ENCODE measurements at regions of chr1 and their contacts with region 1.

Region 1: GRCh38 chr1:150613061-150613920 is 16.1 kb downstream of the ENSA start:
- DNase-seq: peak; percentile 75
- H3K4me3 Mint-ChIP-seq: peak overlapping the region; percentile 62
- H3K27ac Mint-ChIP-seq: peak overlapping the region; percentile 97
- H3K4me1 Mint-ChIP-seq: peaks cover 66% of the 10 kb centered on the region
- H3K27me3 Mint-ChIP-seq: no peaks in the 10 kb centered on the region

Region 2: GRCh38 chr1:150486964-150487762 is 126.1 kb before region 1 on chr1 and contains the start of gene TARS2:
- CTCF ChIA-PET with region 1: no interaction called
- POLR2A ChIA-PET with region 1: no interaction called
- intact Hi-C with region 1: loop called (anchors 5 kb)
- DNase-seq: peak; percentile 98
- H3K4me3 Mint-ChIP-seq: peak within 1 kb of the TSS; percentile 83
- H3K27ac Mint-ChIP-seq: peak within 1 kb of the TSS; percentile 90
- H3K4me1 Mint-ChIP-seq: peaks cover 21% of the 10 kb centered on the region
- H3K27me3 Mint-ChIP-seq: no peaks in the 10 kb centered on the region
- total RNA-seq, gene TARS2: 46.3 to 51.7 TPM

Region 3: DNA sequence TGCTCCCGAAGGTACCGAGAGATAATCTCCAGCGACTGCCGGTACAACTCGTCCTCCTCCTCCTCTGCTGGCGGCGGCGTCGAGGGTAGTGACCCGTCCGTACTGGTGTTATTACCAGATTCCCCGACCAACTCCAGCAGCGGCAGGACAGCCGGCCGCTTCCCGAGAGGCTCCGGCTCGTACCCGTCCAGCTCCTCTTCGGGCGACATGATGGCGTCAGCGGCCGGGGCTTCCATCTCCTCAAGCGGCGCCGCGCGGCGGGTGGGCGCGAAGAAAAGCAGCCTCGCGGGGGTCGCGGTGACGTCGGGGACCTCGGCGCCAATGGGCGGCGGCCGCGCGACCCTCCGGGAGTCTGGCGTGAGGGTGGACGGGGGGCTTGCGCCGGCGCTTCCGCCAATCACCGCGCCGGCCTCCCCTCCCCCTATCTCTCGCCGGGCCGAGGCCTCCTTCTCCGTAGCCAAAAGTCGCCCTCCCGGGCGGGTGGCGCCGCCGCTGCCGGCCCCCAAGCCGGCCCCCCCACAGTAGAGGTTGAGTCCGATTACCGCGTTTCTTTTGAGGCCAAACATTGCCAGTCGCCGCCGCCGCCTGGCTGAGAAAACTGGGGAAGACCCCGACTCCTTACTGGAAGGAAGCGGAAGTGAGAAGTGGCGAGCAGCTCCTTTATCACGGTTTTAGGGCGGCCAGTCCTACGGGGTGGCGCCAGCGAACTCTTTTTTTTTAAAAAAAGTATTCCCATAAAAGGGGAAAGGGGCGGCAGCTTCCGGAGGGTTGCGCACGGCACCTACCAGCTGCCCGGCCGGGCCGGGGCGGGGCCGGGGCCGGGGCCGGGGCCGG is 34.1 kb before region 1 on chr1 and contains the start of gene MCL1:
- CTCF ChIA-PET with region 1: interaction called, 6 read pairs
- POLR2A ChIA-PET with region 1: interaction called, 105 read pairs
- intact Hi-C with region 1: loop called (anchors 1 kb)
- DNase-seq: peak; percentile 95
- H3K4me3 Mint-ChIP-seq: peak within 1 kb of the TSS; percentile 93
- H3K27ac Mint-ChIP-seq: peak within 1 kb of the TSS; percentile 98
- H3K4me1 Mint-ChIP-seq: peaks cover 27% of the 10 kb centered on the region
- H3K27me3 Mint-ChIP-seq: peaks cover 2% of the 10 kb centered on the region
- total RNA-seq, gene MCL1: 280 to 288 TPM

Region 4: DNA sequence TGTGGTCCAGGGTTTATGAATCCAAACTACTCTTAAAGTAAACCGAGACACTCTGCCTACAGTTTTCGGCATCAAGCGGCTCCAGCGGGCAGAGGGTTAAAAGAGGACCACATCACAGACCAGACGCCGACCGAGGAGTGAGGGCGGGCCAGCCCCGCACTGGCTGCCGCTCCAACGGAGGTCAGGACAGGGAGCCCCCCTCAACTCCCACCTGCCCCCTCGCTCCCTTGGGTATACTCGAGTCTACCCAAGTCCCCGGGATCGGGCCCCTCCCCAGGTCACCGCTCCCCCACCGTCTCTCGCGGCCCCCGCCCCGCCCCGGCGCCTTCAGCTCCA is 262.8 kb after region 1 on chr1:
- CTCF ChIA-PET with region 1: no interaction called
- POLR2A ChIA-PET with region 1: no interaction called
- intact Hi-C with region 1: loop called (anchors 5 kb)
- DNase-seq: no peak
- H3K4me3 Mint-ChIP-seq: peak overlapping the region; percentile 84
- H3K27ac Mint-ChIP-seq: peak overlapping the region; percentile 85
- H3K4me1 Mint-ChIP-seq: peaks cover 30% of the 10 kb centered on the region
- H3K27me3 Mint-ChIP-seq: no peaks in the 10 kb centered on the region

Measured in activated CD4-positive, alpha-beta memory T cell treated with anti-CD3 and anti-CD28 coated beads for 36 hours (primary cell).